Mucosa of descending colon (tissue), 3 donors: ENCODE measurements at regions of chr17 and their contacts with region 1.

Region 1: GRCh38 chr17:60717814-60718213 is 40.2 kb downstream of the BCAS3 start:
- DNase-seq: no peak
- ATAC-seq: no peak
- H3K4me3 ChIP-seq: no peak overlapping the region
- H3K4me1 ChIP-seq: no peaks in the 10 kb centered on the region
- CTCF ChIP-seq: no peak

Region 2: GRCh38 chr17:60652454-60653247 is 65.2 kb before region 1 on chr17:
- intact Hi-C with region 1: no loop called
- DNase-seq: no peak
- ATAC-seq: peak; percentile 44
- H3K4me3 ChIP-seq: no peak overlapping the region
- H3K4me1 ChIP-seq: no peaks in the 10 kb centered on the region
- CTCF ChIP-seq: no peak

Region 3: GRCh38 chr17:60809421-60809820 is 91.6 kb after region 1 on chr17:
- intact Hi-C with region 1: no loop called
- DNase-seq: no peak
- ATAC-seq: no peak
- H3K4me3 ChIP-seq: no peak overlapping the region
- H3K4me1 ChIP-seq: no peaks in the 10 kb centered on the region
- CTCF ChIP-seq: no peak

Region 4: GRCh38 chr17:61002316-61002736 is 284.5 kb after region 1 on chr17:
- intact Hi-C with region 1: loop called in 1 of 2 experiments (anchors 5 kb)
- DNase-seq: no peak
- ATAC-seq: peak; percentile 37
- H3K4me3 ChIP-seq: no peak overlapping the region
- H3K4me1 ChIP-seq: no peaks in the 10 kb centered on the region
- CTCF ChIP-seq: no peak